Dendritic cell treated with granulocyte-macrophage colony-stimulating factor and Interleukin-4, amounts not matched to agents 40 ng/mL and 50 ng/mL, for 4 days (primary cell): ENCODE measurements at regions of chr3 and their contacts with region 1.

Region 1: DNA sequence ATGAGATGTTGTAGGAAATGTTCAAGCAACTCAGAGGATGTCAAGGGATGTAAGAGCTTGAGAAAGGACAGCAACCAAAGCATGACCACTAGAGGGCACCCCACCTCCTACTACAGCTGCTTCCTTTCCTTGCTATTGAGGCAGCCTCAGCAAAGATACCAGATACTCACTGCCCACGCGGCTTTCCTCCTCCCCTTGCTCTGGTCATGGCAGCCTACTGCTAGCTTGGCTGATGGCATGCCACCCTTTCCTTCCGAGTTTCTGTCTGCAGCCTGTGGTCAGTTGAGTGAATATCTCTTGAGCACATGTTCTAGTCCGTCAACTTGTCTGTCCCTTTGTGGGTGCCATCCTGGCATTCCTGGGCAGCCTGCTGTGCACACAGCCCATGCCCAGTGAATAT is 4.4 kb upstream of the CXCR6 start:
- H3K4me3 Mint-ChIP-seq: no peak overlapping the region
- H3K27ac Mint-ChIP-seq: no peak overlapping the region
- H3K4me1 Mint-ChIP-seq: peaks cover 10% of the 10 kb centered on the region
- H3K27me3 Mint-ChIP-seq: no peaks in the 10 kb centered on the region

Region 2: GRCh38 chr3:45273681-45274515 is 665.0 kb before region 1 on chr3:
- intact Hi-C with region 1: no loop called
- H3K4me3 Mint-ChIP-seq: no peak overlapping the region
- H3K27ac Mint-ChIP-seq: peak overlapping the region; percentile 78
- H3K4me1 Mint-ChIP-seq: peaks cover 34% of the 10 kb centered on the region
- H3K27me3 Mint-ChIP-seq: peaks cover 3% of the 10 kb centered on the region

Region 3: GRCh38 chr3:46078712-46079400 is 140.0 kb after region 1 on chr3:
- intact Hi-C with region 1: loop called (anchors 1 kb)
- H3K4me3 Mint-ChIP-seq: no peak overlapping the region
- H3K27ac Mint-ChIP-seq: no peak overlapping the region
- H3K4me1 Mint-ChIP-seq: peaks cover 41% of the 10 kb centered on the region
- H3K27me3 Mint-ChIP-seq: no peaks in the 10 kb centered on the region

Region 4: GRCh38 chr3:46214751-46215352 is 276.0 kb after region 1 on chr3:
- intact Hi-C with region 1: loop called (anchors 10 kb)
- H3K4me3 Mint-ChIP-seq: no peak overlapping the region
- H3K27ac Mint-ChIP-seq: no peak overlapping the region
- H3K4me1 Mint-ChIP-seq: peaks cover 18% of the 10 kb centered on the region
- H3K27me3 Mint-ChIP-seq: no peaks in the 10 kb centered on the region

Region 5: DNA sequence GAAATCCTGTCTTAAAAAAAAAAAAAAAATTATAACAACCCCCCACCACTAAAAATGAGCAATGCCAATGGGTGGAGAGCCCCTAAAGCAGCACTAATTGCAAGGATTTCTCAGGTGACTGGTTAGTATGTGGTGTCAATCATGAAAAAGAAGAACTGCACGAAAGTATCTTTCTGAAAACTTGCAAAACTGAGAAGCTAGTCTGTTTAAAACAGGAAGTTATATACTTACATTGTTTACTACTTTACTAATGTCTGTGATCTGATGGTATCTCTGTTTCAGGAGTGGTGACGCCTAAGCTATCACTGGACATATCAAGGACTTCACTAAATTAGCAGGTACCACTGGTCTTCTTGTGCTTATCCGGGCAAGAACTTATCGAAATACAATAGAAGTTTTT is 303.3 kb after region 1 on chr3 and contains the start of gene CCR3:
- intact Hi-C with region 1: no loop called
- H3K4me3 Mint-ChIP-seq: no peak within 1 kb of the TSS
- H3K27ac Mint-ChIP-seq: peak within 1 kb of the TSS; percentile 79
- H3K4me1 Mint-ChIP-seq: peaks cover 40% of the 10 kb centered on the region
- H3K27me3 Mint-ChIP-seq: no peaks in the 10 kb centered on the region

Region 6: DNA sequence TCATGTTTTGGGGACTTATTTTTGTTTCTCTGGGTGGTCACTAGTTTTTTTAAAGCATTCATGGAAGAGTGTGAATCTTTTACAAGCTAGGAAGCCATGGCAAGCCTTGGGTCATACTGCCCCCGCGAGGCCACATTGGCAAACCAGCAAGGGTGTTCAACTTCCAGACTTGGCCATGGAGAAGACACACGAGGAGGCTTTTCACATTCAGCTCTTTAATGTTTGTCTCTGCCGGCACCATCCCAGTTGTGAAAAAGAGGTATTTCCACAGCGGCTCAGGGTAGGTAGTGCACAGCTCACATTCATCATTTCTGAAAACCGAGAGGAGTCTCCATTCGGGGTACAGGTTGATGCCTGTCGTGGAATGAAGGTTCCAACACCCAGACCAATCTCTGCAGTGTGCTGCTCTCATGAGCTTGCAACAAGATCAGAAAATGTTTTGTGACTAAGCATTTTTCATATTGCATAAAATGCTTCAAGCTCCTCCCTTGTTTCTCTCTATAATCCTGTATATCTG is 439.6 kb after region 1 on chr3:
- intact Hi-C with region 1: loop called (anchors 5 kb)
- H3K4me3 Mint-ChIP-seq: no peak overlapping the region
- H3K27ac Mint-ChIP-seq: no peak overlapping the region
- H3K4me1 Mint-ChIP-seq: peaks cover 73% of the 10 kb centered on the region
- H3K27me3 Mint-ChIP-seq: no peaks in the 10 kb centered on the region

Region 7: DNA sequence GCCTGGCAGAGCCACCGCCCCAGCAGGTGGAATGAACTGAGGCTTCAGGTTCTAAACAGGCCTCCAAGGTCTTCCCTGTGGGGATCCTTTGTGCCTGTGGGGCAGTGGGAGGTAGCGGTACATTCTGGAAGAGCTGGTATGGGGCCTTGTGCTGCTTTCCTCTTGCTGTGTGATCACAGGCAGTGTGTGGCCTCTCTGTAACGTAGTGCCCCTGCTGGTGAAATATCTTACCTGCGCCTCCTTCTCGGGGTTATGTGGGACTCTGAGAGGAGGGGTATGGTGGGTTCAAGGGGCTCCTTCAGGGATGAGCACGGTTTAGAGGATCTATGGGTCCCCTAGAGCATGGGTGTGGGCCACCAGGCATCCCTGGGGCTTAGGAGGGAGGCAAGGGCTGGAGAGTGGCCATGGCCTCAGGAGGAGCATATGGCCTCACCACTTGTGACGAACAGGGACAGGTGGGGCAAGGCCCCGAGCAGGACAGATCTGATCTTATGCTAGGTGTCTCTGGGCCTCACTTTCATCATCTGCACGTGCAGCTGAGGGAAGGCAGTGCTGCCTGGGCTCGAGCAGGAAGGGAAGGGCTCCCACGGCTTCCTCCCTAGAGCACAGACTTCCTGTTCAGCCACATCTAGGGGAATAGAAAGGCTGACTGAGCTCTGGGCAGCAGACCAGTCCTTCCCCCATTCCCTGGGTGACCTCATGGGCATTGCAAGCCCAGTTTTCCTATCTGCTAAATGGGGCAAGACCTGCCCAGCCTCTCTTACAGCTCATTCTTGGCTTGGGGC is 756.5 kb after region 1 on chr3:
- intact Hi-C with region 1: no loop called
- H3K4me3 Mint-ChIP-seq: no peak overlapping the region
- H3K27ac Mint-ChIP-seq: peak overlapping the region; percentile 58
- H3K4me1 Mint-ChIP-seq: peaks cover 63% of the 10 kb centered on the region
- H3K27me3 Mint-ChIP-seq: peaks cover 69% of the 10 kb centered on the region